Dorsolateral prefrontal cortex (tissue), 120 donors: ENCODE measurements at regions of chr5 and their contacts with region 1.

Region 1: GRCh38 chr5:34929150-34929719 is at the start of gene DNAJC21:
- DNase-seq: peak; percentile 93 to 99 (median 98)
- H3K4me3 ChIP-seq: peak within 1 kb of the TSS; percentile 59 to 95 (median 89)
- H3K27ac ChIP-seq: peak within 1 kb of the TSS; percentile 34 to 94 (median 84)
- H3K27me3 ChIP-seq: no peaks in the 10 kb centered on the region
- CTCF ChIP-seq: peak in 18 of 56 donors; percentile 10 to 43 (median 24)
- total RNA-seq, gene DNAJC21: 26.8 to 56.6 (median 37.3) TPM

Region 2: DNA sequence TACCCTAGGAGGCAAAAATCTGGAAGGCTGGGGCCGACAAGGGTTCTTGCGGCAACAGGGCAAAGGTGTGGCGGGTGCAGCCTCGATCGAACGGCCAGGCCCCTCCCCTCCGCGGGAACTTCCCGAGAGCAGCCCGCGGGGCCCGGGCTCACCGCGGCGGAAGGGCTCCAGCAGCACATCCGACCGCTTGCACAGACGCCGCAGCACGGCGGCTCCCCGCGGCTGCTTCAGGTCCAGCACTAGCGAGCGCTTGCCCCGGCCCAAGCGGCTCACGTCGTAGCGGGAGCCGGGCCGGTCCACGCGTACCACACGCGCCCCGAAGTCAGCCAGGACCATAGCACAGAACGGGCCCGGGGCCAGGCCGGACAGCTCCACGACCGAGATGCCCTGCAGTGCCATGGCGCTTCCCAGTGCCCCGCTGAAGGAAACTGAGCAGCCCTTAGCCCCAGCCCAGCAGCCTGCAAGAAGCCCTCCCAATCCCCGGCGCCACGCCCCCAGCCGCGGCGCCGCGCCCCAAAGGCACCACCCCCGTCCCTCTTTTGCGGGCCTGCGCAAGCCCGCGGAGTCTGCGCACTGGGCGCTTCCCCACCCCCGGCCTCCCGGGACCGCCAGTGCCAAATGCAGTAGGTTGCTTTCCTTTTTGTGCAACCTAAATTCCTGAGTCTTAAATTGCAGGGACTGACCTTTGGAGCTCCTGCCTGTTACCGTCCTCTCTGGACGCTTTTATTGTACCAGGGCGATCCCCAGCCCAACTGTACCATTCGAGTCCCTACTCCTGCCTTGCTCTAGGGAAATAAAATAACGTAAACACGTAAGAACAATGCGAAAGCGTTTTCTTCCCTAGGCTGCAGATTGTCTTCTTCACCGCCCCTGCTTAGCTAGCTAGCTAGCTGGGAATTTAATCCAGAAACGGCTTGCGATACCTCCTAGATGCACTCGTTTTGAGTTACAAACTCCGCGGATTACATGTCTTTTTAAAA is 921.3 kb before region 1 on chr5 and contains the start of gene AMACR:
- intact Hi-C with region 1: loop called in 1 of 2 experiments (anchors 10 kb)
- DNase-seq: peak; percentile 71 to 95 (median 90)
- H3K4me3 ChIP-seq: peak within 1 kb of the TSS; percentile 58 to 96 (median 79)
- H3K27ac ChIP-seq: peak within 1 kb of the TSS; percentile 75 to 99 (median 97)
- H3K27me3 ChIP-seq: no peaks in the 10 kb centered on the region
- CTCF ChIP-seq: peak in 29 of 56 donors; percentile 4 to 45 (median 17)
- total RNA-seq, gene AMACR: 5.2 to 32.6 (median 16.9) TPM

Region 3: DNA sequence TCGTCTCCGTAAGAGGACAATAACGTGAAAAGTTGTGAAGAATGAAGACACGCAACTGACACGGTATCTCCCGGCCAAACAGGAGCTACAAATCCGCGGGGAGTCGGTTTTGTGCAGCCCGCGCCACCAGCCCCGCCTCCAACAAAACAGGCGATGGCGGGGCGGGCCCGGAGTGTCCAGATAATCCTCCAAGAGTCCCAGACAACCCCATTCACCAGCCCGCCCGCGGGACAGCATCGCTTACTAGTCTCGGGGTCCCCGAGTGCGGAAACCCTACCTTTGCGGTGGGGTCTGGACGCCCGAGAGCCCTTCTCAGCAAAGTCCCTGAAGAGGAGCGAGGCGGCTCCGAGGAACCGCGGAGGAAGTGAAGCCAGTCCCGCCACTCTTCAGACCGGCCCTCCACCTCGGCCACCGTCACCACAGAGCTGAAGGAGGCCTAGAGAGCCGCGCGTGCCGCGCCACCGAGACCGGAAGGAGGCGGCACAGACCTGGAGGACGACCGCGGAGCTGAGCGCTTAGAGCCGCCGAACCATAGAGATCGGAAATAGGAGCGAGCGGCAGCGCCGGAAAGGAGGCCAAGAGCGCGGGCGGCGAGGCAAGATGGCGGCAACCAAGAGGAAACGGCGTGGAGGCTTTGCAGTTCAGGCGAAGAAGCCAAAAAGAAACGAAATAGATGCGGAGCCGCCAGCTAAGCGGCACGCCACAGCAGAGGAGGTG is 13.9 kb before region 1 on chr5 and contains the starts of genes BRIX1 and RAD1:
- intact Hi-C with region 1: loop called (anchors 1 kb)
- DNase-seq: peak; percentile 93 to 98 (median 97)
- H3K4me3 ChIP-seq: peak within 1 kb of the TSS; percentile 65 to 100 (median 94)
- H3K27ac ChIP-seq: peak within 1 kb of the TSS; percentile 22 to 96 (median 86)
- H3K27me3 ChIP-seq: no peaks in the 10 kb centered on the region
- CTCF ChIP-seq: peak in 55 of 56 donors; percentile 14 to 69 (median 46)
- total RNA-seq, gene BRIX1: 9.9 to 27.7 (median 18.0) TPM
- total RNA-seq, gene RAD1: 11.2 to 31.2 (median 21.8) TPM